ENCODE measurements at regions of chr4 and their contacts with region 1.

Region 1: DNA sequence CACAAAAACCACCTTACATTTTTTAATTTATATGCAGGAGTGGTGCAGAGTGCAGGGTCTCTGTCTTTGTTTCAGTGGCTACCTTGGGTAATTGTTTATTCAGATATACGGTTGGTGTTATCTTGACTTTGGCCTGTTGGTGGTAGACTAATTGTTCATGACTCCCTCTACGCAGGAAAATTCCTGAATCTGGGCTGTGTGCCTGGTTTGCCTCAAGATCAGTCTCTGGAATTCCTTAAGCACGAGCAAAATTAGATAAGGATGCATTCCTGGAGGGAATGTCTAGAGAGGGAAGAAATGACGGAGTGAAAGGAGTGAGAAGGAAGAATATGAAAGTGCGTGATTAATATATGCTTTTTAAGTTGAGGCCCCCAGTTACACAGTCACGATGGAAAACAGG is 576.9 kb upstream of the PCDH10 start:
- DNase-seq: peak; percentile 33
- H3K4me3 ChIP-seq: no peak overlapping the region
- H3K27ac ChIP-seq: no peak overlapping the region
- H3K4me1 ChIP-seq: no peaks in the 10 kb centered on the region
- H3K27me3 ChIP-seq: no peaks in the 10 kb centered on the region
- CTCF ChIP-seq: no peak
- POLR2A ChIP-seq: no peak

Region 2: DNA sequence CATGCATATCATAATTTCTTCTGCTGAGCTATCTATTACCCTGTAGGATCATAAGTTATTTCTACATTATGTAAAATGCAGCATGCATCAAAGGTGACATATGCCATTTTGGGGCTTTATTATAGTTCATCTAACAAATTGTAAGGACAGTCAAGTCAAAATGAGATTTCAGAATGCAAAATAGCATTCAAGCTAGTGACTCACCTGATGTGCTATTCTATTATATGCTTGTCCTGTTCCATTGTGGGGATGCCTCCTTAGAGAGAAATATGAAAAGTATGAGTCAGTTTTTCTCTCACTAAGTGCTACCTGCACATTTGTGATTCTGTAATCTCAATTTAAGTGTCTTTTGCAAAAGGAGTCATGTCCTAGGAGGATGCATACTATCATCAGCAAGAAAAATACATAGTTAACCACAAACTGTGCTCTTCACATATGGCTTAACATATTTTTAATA is 70.1 kb before region 1 on chr4:
- CTCF ChIA-PET with region 1: no interaction called
- POLR2A ChIA-PET with region 1: no interaction called
- dilution Hi-C with region 1: no loop called
- intact Hi-C with region 1: no loop called
- DNase-seq: peak; percentile 16
- H3K4me3 ChIP-seq: no peak overlapping the region
- H3K27ac ChIP-seq: no peak overlapping the region
- H3K4me1 ChIP-seq: peaks cover 3% of the 10 kb centered on the region
- H3K27me3 ChIP-seq: no peaks in the 10 kb centered on the region
- CTCF ChIP-seq: no peak
- POLR2A ChIP-seq: no peak

Region 3: DNA sequence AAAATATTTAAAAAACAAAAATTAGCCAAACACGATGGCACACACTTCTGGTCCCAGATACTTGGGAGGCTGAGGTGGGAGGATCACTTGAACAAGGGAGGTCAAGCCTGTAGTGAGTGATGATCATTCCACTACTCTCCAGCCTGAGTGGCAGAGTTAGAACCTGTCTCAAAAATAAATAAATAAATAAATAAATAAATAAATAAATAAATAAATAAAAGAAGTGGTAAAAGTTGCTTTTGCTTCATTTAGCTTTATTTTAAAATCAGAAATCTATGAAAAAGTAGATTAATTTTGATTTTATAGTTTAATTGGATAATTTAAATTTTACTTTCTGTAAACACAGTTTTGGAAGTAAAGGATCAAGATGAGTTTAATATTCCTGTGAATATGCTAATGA is 24.0 kb after region 1 on chr4:
- CTCF ChIA-PET with region 1: no interaction called
- POLR2A ChIA-PET with region 1: no interaction called
- dilution Hi-C with region 1: no loop called
- intact Hi-C with region 1: no loop called
- DNase-seq: no peak
- H3K4me3 ChIP-seq: no peak overlapping the region
- H3K27ac ChIP-seq: no peak overlapping the region
- H3K4me1 ChIP-seq: no peaks in the 10 kb centered on the region
- H3K27me3 ChIP-seq: no peaks in the 10 kb centered on the region
- CTCF ChIP-seq: no peak
- POLR2A ChIP-seq: no peak

Region 4: GRCh38 chr4:132614682-132615081 is 42.5 kb after region 1 on chr4:
- CTCF ChIA-PET with region 1: no interaction called
- POLR2A ChIA-PET with region 1: no interaction called
- dilution Hi-C with region 1: no loop called
- intact Hi-C with region 1: loop called (anchors 1 kb)
- DNase-seq: peak; percentile 19
- H3K4me3 ChIP-seq: no peak overlapping the region
- H3K27ac ChIP-seq: no peak overlapping the region
- H3K4me1 ChIP-seq: no peaks in the 10 kb centered on the region
- H3K27me3 ChIP-seq: no peaks in the 10 kb centered on the region
- CTCF ChIP-seq: peak; percentile 13 to 18
- POLR2A ChIP-seq: no peak

Measured in endothelial cell of umbilical vein (primary cell).